ENCODE measurements at regions of chr16 and their contacts with region 1.

Region 1: DNA sequence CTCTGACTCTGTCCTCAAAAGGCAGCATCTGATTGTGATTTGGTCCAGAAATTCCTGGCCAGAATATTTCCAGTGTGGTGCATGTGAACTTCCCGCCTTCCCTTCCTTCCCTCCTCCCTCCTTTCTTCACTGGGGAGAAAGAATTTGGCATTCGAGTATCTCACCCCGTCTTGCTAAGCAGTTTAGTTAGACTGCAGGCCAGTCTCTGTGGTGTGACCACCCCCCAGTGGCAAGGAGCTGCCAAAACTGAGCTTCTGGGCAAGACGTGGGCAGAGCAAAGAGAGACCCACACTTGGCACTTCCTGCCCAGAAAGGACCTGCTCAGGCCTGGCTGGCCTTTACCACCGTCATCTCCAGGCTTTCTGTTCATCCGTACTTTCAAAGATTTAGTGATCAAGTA is 36.4 kb downstream of the SNX20 start:
- DNase-seq: no peak
- H3K4me3 ChIP-seq: no peak overlapping the region
- H3K27ac ChIP-seq: no peak overlapping the region
- H3K4me1 ChIP-seq: no peaks in the 10 kb centered on the region
- H3K27me3 ChIP-seq: no peaks in the 10 kb centered on the region
- CTCF ChIP-seq: peak in 2 of 3 donors; percentile 17 to 28
- POLR2A ChIP-seq: no peak

Region 2: DNA sequence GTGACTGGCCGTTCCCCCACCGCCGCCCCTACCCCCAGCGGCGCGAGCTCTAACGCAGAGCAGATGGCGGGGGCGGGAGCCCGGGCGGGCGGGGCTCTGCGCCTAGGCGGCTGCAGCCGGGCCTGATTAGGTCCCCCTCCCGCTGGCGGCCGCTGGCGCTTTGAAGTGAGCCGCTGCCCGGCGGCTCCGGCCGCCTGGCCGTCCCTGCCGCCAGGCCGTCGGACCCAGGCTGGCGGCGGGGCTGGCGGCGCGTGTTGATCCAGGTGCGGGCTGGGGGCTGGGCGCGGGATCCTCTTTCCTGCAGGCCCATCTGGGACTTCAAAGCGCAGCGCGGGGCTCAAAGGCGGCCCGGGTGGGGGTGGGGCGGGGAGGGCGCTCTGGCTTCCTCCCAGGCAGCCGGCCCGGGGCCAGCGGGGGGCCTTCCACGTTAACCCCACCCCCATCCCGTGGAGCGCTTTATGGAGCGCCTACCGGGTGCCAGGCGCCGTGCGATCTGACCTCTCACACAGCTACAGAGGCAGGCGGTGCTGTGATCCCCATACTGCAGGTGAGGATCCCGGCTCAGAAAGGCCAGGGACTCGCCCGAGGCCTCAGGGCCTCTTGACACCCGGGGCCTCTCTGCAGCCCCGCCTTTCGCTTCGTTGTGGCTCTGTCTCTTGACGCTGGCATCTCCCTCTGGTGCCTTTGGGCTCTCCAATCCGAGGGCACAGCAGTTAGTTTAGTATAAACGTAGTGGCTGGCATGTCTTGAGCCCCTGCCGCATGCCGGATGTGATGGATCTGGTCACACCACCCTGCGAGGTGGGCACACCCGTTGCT is 176.6 kb before region 1 on chr16:
- intact Hi-C with region 1: loop called (anchors 5 kb)
- DNase-seq: no peak
- H3K4me3 ChIP-seq: peak overlapping the region; percentile 23 to 65 (median 46)
- H3K27ac ChIP-seq: no peak overlapping the region
- H3K4me1 ChIP-seq: no peaks in the 10 kb centered on the region
- H3K27me3 ChIP-seq: peaks cover 3 to 24% of the 10 kb centered on the region in 2 donors
- CTCF ChIP-seq: no peak
- POLR2A ChIP-seq: no peak

Region 3: DNA sequence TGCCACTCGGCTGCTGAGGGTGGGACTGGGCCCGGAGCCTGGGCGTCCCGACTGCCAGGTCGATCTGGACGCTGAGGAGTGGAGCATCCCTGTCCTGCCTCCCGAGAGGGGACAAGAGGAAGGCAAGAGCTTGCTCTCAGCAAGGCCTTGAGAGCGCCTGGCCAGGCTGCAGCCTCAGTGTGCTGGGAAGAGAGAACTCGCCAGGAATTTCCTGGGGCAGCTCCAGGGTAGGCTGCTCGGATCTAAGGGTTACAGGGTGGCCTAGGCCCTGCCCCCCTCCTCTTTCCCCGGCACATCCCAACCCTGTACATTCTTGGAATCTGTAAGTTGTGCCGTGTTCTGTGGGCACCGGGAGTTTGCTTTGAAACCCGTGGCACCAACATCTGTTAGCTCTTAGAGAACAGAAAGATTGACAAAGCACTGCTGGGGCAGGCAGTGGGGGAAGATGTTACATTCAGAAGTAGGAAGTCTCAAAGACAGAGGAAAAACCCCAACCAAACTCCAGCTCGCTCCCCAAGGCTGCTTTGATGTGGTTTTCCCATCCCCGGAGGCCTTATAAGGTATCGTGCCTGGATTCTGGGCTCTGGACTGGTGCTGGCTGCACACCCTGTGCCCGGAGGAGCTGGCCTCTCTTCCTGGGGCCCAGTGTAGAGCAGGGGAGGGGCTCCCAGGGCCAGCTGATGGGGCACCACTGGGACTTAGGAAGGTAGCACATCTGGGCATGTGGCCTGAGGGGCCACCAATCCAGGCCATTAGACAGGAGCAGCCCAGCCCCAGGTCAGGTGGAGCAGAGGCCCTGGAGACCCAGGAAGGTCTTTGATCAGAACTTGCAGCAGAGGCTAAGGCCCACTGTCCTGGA is 41.3 kb before region 1 on chr16:
- intact Hi-C with region 1: no loop called
- DNase-seq: peak in 1 of 2 donors; percentile 27
- H3K4me3 ChIP-seq: peak overlapping the region in 1 of 3 donors; percentile 16
- H3K27ac ChIP-seq: peak overlapping the region in 1 of 2 donors; percentile 73
- H3K4me1 ChIP-seq: peaks cover 0 to 12% of the 10 kb centered on the region in 2 donors
- H3K27me3 ChIP-seq: no peaks in the 10 kb centered on the region
- CTCF ChIP-seq: no peak
- POLR2A ChIP-seq: no peak

Region 4: GRCh38 chr16:52095471-52095870 is 1450.7 kb after region 1 on chr16:
- intact Hi-C with region 1: loop called (anchors 5 kb)
- DNase-seq: no peak
- H3K4me3 ChIP-seq: no peak overlapping the region
- H3K27ac ChIP-seq: no peak overlapping the region
- H3K4me1 ChIP-seq: no peaks in the 10 kb centered on the region
- H3K27me3 ChIP-seq: no peaks in the 10 kb centered on the region
- CTCF ChIP-seq: no peak
- POLR2A ChIP-seq: no peak

Measured in breast epithelium (tissue), 4 donors.